Activated CD4-positive, alpha-beta T cell treated with anti-CD3 and anti-CD28 coated beads, Interleukin-2, amount 10 ng/mL, durations not matched to agents 24 days and 14 days (primary cell): ENCODE measurements at regions of chr9 and their contacts with region 1.

Region 1: GRCh38 chr9:38088006-38088925 is 19.2 kb upstream of the SHB start:
- DNase-seq: peak; percentile 92
- H3K4me3 Mint-ChIP-seq: no peak overlapping the region
- H3K27ac Mint-ChIP-seq: no peak overlapping the region
- H3K4me1 Mint-ChIP-seq: no peaks in the 10 kb centered on the region
- H3K27me3 Mint-ChIP-seq: peaks cover 19% of the 10 kb centered on the region

Region 2: GRCh38 chr9:38068866-38069629 is 19.2 kb before region 1 on chr9 and contains the start of gene SHB:
- intact Hi-C with region 1: no loop called
- DNase-seq: peak; percentile 91
- H3K4me3 Mint-ChIP-seq: peak within 1 kb of the TSS; percentile 82
- H3K27ac Mint-ChIP-seq: no peak within 1 kb of the TSS
- H3K4me1 Mint-ChIP-seq: peaks cover 14% of the 10 kb centered on the region
- H3K27me3 Mint-ChIP-seq: peaks cover 46% of the 10 kb centered on the region
- total RNA-seq, gene SHB: 1.6 and 2.1 TPM in 2 replicates

Region 3: GRCh38 chr9:38160613-38161215 is 72.4 kb after region 1 on chr9:
- intact Hi-C with region 1: loop called (anchors 5 kb)
- DNase-seq: peak; percentile 88
- H3K4me3 Mint-ChIP-seq: no peak overlapping the region
- H3K27ac Mint-ChIP-seq: no peak overlapping the region
- H3K4me1 Mint-ChIP-seq: peaks cover 3% of the 10 kb centered on the region
- H3K27me3 Mint-ChIP-seq: no peaks in the 10 kb centered on the region

Region 4: GRCh38 chr9:38227061-38227540 is 138.8 kb after region 1 on chr9:
- intact Hi-C with region 1: no loop called
- DNase-seq: peak; percentile 85
- H3K4me3 Mint-ChIP-seq: peak overlapping the region; percentile 68
- H3K27ac Mint-ChIP-seq: no peak overlapping the region
- H3K4me1 Mint-ChIP-seq: peaks cover 11% of the 10 kb centered on the region
- H3K27me3 Mint-ChIP-seq: peaks cover 13% of the 10 kb centered on the region

Region 5: GRCh38 chr9:38362852-38363593 is 274.8 kb after region 1 on chr9:
- intact Hi-C with region 1: loop called (anchors 2 kb)
- DNase-seq: peak; percentile 69
- H3K4me3 Mint-ChIP-seq: peak overlapping the region; percentile 61
- H3K27ac Mint-ChIP-seq: peak overlapping the region; percentile 60
- H3K4me1 Mint-ChIP-seq: peaks cover 4% of the 10 kb centered on the region
- H3K27me3 Mint-ChIP-seq: peaks cover 4% of the 10 kb centered on the region